Activated CD4-positive, alpha-beta T cell treated with anti-CD3 and anti-CD28 coated beads, Interleukin-2, amount 10 ng/mL, durations not matched to agents 24 days and 14 days (primary cell): ENCODE measurements at regions of chr1 and their contacts with region 1.

Region 1: DNA sequence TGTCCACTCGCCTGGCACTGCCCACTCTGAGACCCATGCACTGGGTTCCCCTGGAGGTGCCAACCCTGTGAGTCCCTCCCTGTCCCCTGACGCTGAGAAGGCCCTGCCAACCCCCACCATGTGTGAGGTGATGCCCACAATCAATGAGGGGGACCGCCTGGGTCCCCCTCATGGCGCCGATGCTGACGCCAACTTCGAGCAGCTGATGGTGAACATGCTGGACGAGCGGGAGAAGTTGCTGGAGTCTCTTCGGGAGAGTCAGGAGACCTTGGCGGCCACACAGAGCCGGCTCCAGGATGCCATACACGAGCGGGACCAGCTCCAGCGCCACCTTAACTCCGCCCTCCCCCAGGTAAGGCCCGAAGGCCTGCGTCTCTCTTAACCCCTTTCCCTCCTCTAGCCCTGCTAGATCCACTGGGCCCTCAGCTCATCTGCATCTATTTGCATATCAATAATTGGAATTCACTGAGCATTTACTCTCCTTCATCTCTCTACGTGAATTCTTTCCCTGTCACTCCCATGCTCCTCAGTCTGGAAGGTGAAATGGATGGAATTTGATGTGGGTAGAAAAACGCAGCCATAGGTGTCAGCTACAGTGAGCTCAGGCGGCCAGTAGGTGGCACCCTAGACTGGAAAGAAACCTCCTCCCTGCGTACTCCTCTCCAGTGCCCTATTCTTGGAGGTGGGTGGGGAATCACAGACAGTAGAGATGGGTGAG is 12.8 kb downstream of the PPFIA4 start:
- DNase-seq: peak; percentile 89
- H3K4me3 Mint-ChIP-seq: no peak overlapping the region
- H3K27ac Mint-ChIP-seq: no peak overlapping the region
- H3K4me1 Mint-ChIP-seq: peaks cover 10% of the 10 kb centered on the region
- H3K27me3 Mint-ChIP-seq: no peaks in the 10 kb centered on the region

Region 2: DNA sequence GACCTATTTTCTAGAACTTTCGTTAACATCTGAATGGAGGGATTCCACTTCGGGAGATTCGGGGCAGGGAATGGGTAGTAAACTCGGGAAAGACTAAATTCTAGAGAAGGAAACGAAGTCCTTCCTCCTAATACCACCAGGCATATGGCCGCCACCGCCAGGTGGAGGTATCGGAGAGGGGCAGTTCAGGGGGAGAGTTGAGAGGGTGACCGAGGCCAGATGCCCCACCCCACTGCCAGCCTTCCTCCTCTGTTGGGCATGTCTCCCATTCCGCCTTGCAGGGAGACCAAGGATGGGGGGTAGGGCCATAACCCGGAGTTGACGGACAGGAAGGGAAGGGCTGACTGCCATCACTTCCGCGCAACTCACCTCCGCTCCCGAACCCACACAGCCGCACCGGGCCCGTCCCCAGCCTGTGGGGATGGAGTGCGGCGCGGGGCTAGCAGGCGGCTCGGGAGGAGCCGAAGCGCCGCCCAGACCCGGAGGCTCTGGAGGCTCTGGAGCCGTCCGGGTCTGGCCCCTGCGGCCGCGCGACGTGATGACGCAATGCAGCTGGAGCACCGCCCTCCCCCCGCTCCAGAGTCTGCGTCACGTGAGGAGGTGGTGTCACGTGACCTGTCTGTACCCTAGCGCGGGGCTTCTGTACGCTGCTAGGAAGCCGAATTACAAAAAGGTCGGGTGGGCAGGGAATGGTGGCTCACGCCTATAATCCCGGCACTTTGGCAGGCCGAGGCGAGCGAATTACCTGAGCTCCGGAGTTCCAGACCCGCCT is 112.1 kb before region 1 on chr1 and contains the start of gene KLHL12:
- intact Hi-C with region 1: no loop called
- DNase-seq: peak; percentile 98
- H3K4me3 Mint-ChIP-seq: peak within 1 kb of the TSS; percentile 89
- H3K27ac Mint-ChIP-seq: peak within 1 kb of the TSS; percentile 92
- H3K4me1 Mint-ChIP-seq: peaks cover 23% of the 10 kb centered on the region
- H3K27me3 Mint-ChIP-seq: peaks cover 8% of the 10 kb centered on the region
- total RNA-seq, gene KLHL12: 28.0 and 30.5 TPM in 2 replicates

Region 3: GRCh38 chr1:202968840-202969295 is 70.2 kb before region 1 on chr1:
- intact Hi-C with region 1: no loop called
- DNase-seq: peak; percentile 81
- H3K4me3 Mint-ChIP-seq: no peak overlapping the region
- H3K27ac Mint-ChIP-seq: no peak overlapping the region
- H3K4me1 Mint-ChIP-seq: peaks cover 24% of the 10 kb centered on the region
- H3K27me3 Mint-ChIP-seq: peaks cover 15% of the 10 kb centered on the region

Region 4: DNA sequence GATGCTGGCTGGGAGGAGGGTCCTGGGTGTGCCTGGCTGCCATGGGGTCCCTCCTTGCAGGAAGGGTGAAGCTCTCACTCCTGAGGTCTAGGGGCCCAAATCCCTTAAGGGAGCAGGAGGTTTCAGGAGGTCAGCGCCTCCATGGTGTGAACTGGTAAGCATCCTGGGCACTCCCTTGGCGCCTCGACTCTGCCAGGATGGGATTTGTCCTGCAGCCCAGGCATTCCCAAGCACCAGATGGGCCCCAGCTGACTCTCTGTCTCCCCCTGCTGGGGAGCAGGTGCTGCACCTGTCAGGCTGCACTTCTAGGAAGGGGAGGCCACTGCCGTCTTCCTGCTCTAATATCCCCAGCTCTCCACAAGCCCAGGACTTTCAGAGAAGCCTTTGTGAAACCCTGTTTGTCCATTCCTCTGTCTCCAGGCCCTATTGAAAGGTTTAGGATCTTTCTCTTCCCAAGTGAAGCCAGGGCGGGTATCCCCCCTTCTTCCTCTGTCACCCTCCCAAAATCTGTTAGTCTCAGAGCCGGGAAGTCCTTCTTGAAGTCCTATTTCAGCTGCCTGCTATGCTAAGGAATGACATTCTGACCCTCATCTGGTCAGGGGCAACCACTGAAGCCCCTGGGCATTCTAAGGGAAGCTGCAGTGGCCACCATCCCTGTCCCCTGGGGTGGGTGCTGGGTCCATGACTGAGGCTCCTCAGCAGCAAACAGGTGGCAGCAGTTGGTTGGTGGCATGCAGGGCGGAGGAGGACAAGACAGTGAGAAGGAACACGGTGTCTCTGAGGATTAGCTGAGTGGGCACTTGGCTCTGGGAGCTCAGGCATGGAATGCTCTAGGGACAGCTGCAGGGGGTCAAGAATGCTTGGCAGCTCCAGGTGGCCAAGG is 133.3 kb after region 1 on chr1:
- intact Hi-C with region 1: loop called (anchors 1 kb)
- DNase-seq: peak; percentile 86
- H3K4me3 Mint-ChIP-seq: no peak overlapping the region
- H3K27ac Mint-ChIP-seq: no peak overlapping the region
- H3K4me1 Mint-ChIP-seq: no peaks in the 10 kb centered on the region
- H3K27me3 Mint-ChIP-seq: no peaks in the 10 kb centered on the region

Region 5: GRCh38 chr1:203216274-203217138 is 177.5 kb after region 1 on chr1:
- intact Hi-C with region 1: loop called (anchors 1 kb)
- DNase-seq: peak; percentile 90
- H3K4me3 Mint-ChIP-seq: no peak overlapping the region
- H3K27ac Mint-ChIP-seq: no peak overlapping the region
- H3K4me1 Mint-ChIP-seq: peaks cover 2% of the 10 kb centered on the region
- H3K27me3 Mint-ChIP-seq: peaks cover 13% of the 10 kb centered on the region

Region 6: GRCh38 chr1:203267347-203267846 is 228.3 kb after region 1 on chr1:
- intact Hi-C with region 1: loop called (anchors 2 kb)
- DNase-seq: peak; percentile 96
- H3K4me3 Mint-ChIP-seq: peak overlapping the region; percentile 87
- H3K27ac Mint-ChIP-seq: peak overlapping the region; percentile 76
- H3K4me1 Mint-ChIP-seq: peaks cover 18% of the 10 kb centered on the region
- H3K27me3 Mint-ChIP-seq: peaks cover 4% of the 10 kb centered on the region